ENCODE measurements at regions of chr4 and their contacts with region 1.

Region 1: DNA sequence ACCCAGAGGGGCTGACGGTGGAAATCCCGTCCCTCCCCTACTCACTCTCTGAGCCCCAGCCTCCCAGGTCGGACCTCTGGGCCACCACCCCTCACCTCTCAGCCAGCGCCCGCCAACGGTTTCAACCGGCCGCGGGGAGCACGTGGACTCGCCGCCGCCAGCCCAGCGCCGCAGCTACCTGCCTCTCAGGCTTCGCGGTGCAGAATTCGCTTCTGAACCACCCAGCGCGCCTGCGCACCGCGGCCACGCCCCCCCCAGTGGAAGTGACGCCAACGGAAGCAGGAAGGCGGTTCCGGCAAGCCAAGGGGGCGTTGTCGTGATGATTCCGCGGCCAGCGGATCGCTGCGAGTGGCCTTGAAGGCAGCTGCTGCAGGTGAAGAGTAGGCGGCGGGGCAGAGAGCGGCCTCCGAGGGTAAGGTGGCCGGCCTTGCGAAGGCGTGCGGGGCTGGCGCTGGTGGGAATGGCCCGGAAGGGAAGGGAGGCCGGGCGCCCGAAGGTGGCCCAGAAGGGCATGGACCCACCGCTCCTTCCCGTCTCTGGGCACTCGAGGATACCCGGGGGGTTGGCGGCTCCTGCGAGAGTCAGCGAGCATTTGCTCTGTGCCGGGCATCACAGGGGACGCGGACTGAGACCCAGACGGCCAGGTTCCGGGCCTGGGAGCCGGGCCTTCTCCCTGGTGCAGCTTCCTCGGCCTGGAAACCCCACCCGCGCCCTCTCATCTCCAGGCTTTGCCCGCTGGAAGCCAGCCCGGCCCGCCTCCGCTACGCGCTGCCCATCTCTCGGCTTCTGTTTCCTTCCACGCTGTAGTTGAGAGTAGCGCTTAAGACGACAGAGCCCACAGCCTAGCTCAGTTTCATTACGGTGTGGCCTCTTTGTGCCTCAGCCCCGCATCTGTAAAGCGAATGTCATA is at the starts of genes LYAR and ZBTB49:
- DNase-seq: peak; percentile 95 to 98 (median 97)
- ATAC-seq: peak; percentile 92
- H3K4me3 ChIP-seq: peak within 1 kb of the TSS; percentile 88 to 89
- H3K4me3 Mint-ChIP-seq: peak within 1 kb of the TSS; percentile 97
- H3K27ac ChIP-seq: peak within 1 kb of the TSS; percentile 74 to 77
- H3K27ac Mint-ChIP-seq: peak within 1 kb of the TSS; percentile 96
- H3K4me1 ChIP-seq: peaks cover 31% of the 10 kb centered on the region
- H3K4me1 Mint-ChIP-seq: peaks cover 75% of the 10 kb centered on the region
- H3K27me3 ChIP-seq: no peaks in the 10 kb centered on the region
- H3K27me3 Mint-ChIP-seq: no peaks in the 10 kb centered on the region
- CTCF ChIP-seq: no peak
- total RNA-seq, gene LYAR: 57.8 to 59.0 TPM
- total RNA-seq, gene ZBTB49: 15.9 to 21.1 TPM

Region 2: GRCh38 chr4:4248029-4248884 is 41.9 kb before region 1 on chr4 and contains the start of gene TMEM128:
- CTCF ChIA-PET with region 1: no interaction called
- POLR2A ChIA-PET with region 1: interaction called, 8 read pairs
- intact Hi-C with region 1: loop called (anchors 1 kb)
- DNase-seq: peak; percentile 85 to 96 (median 93)
- ATAC-seq: peak; percentile 95
- H3K4me3 ChIP-seq: peak within 1 kb of the TSS; percentile 85 to 89
- H3K4me3 Mint-ChIP-seq: peak within 1 kb of the TSS; percentile 96
- H3K27ac ChIP-seq: peak within 1 kb of the TSS; percentile 89 to 95
- H3K27ac Mint-ChIP-seq: peak within 1 kb of the TSS; percentile 99
- H3K4me1 ChIP-seq: peaks cover 17% of the 10 kb centered on the region
- H3K4me1 Mint-ChIP-seq: peaks cover 42% of the 10 kb centered on the region
- H3K27me3 ChIP-seq: no peaks in the 10 kb centered on the region
- H3K27me3 Mint-ChIP-seq: no peaks in the 10 kb centered on the region
- CTCF ChIP-seq: no peak
- total RNA-seq, gene TMEM128: 6.4 TPM

Region 3: DNA sequence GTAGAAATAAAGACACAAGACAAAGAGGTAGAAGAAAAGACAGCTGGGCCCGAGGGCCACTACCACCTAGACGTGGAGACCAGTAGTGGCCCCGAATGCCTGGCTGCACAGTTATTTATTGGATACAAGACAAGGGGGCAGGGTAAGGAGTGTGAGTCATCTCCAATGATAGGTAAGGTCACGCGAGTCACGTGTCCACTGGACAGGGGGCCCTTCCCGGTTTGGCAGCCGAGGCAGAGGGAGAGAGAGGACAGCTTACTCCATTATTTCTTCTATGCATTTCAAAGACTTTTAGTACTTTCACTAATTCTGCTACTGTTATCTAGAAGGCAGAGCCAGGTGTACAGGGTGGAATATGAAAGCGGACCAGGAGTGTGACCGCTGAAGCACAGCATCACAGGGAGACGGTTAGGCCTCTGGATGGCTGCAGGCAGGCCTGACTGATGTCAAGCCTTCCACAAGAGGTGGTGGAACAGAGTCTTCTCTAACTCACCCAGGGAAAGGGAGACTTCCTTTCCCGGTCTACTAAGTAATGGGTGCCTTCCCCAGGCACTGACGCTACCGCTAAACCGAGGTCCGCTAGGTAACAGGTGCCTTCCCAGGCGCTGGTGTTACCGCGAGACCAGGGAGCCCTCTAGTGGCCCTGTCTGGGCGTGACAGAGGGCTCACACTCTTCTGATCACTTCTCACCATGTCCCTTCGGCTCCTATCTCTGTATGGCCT is 44.8 kb after region 1 on chr4:
- CTCF ChIA-PET with region 1: interaction called, 3 read pairs
- POLR2A ChIA-PET with region 1: no interaction called
- intact Hi-C with region 1: loop called (anchors 1 to 2 kb)
- DNase-seq: peak; percentile 55 to 88 (median 77)
- ATAC-seq: peak; percentile 100
- H3K4me3 ChIP-seq: no peak overlapping the region
- H3K4me3 Mint-ChIP-seq: peak overlapping the region; percentile 43
- H3K27ac ChIP-seq: no peak overlapping the region
- H3K27ac Mint-ChIP-seq: peak overlapping the region; percentile 49
- H3K4me1 ChIP-seq: peaks cover 6% of the 10 kb centered on the region
- H3K4me1 Mint-ChIP-seq: peaks cover 17% of the 10 kb centered on the region
- H3K27me3 ChIP-seq: no peaks in the 10 kb centered on the region
- H3K27me3 Mint-ChIP-seq: no peaks in the 10 kb centered on the region
- CTCF ChIP-seq: peak; percentile 65

Region 4: DNA sequence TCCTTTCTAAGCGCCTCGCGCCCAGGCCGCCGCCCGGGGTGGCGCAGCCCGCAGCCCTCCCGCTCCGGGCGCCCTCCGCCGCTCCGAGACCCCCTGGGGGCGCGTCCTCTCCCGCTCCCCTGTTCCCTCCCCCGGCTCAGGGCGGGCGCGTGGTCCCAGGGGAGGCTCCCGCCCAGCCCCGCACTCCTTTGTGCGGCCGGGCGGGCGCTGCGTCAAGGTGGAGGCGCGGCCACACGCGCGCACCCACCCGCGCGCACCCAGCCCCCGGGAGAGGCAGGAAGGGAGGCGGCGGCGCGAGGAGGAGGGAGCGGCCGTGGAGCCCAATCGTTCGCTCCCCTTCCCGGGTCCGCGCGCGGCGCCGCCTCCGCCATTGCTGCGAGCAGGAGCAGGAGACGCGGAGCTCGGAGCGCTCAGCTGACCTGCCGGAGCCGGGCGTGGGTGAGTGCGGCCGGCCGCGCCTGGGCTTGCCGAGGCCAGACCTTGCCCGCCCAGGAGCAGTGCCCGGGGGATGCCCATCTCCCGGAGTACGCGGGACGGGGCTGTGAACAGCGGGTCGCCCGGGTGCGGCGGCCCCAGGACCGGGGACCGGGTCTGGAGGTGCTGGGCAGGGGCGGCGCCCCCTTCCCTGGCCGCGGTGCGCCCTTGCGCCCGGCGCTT is 96.7 kb after region 1 on chr4 and contains the start of gene NSG1:
- CTCF ChIA-PET with region 1: no interaction called
- POLR2A ChIA-PET with region 1: no interaction called
- intact Hi-C with region 1: loop called (anchors 1 kb)
- DNase-seq: peak in 8 of 9 experiments; percentile 29 to 72 (median 53)
- ATAC-seq: peak; percentile 66
- H3K4me3 ChIP-seq: peak within 1 kb of the TSS; percentile 58 to 76
- H3K4me3 Mint-ChIP-seq: peak within 1 kb of the TSS; percentile 93
- H3K27ac ChIP-seq: peak within 1 kb of the TSS; percentile 30 to 35
- H3K27ac Mint-ChIP-seq: peak within 1 kb of the TSS; percentile 82
- H3K4me1 ChIP-seq: peaks cover 14% of the 10 kb centered on the region
- H3K4me1 Mint-ChIP-seq: peaks cover 25% of the 10 kb centered on the region
- H3K27me3 ChIP-seq: no peaks in the 10 kb centered on the region
- H3K27me3 Mint-ChIP-seq: peaks cover 7% of the 10 kb centered on the region
- CTCF ChIP-seq: no peak
- total RNA-seq, gene NSG1: 14.2 to 15.8 TPM